Left colon (tissue), 2 donors: ENCODE measurements at regions of chr10 and their contacts with region 1.

Region 1: DNA sequence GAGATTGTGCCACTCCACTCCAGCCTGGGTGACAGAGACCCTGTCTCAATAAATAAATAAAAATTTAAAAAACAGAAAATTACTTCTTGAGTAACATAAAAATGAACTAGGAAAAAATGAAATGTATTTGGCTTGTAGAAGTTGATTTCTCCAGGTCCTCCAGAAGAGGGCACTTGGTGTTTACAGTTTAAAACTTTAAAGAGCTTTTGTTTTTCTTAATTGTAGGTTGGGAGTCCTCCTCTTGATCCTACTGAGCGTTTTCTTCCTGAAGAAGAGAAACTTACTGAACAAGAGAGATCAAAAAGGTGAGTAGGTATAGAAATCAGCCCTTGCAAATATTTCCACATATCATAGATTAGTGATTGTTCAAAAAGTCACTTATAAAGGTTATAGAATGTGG is 16.2 kb downstream of the KIFBP start:
- DNase-seq: no peak
- ATAC-seq: peak; percentile 48

Region 2: GRCh38 chr10:67110286-67110685 is 1894.5 kb before region 1 on chr10:
- intact Hi-C with region 1: no loop called
- DNase-seq: no peak
- ATAC-seq: no peak

Region 3: DNA sequence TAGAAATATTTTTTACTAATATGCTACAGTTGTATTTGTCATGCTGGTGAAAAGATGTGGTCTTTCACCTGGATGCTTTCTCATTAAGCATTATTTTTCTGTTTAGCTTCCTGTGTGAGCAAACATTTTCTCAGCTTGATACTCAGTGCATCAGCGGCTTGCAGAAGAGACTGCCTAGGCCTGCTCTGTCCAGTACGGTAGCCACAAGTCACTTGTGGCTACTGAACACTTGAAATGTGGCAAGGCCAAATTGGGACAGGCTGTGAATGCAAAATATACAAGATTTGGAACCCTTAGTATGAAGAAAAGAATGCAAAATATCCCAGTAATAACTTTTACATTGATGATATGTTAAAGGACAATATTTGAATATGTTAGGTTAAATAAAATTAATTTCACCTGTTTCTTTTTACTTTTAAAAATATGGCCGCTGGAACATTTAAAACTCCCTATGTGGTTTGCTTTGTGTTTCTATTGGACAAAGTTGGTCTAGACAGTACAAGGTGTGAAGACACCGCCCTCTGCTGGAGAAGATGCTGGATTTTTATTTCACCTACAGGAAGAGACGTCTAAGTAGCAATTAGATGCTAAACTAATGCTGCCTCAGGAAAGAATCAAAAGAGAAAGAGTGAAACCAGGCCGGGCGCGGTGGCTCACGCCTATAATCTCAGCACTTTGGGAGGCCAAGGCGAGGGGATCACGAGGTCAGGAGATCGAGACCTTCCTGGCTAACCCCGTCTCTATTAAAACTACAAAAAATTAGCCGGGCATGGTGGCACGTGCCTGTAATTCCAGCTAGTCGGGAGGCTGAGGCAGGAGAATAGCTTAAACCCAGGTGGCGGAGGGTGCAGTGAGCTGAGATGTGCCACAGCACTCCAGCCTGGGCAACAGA is 88.4 kb after region 1 on chr10:
- intact Hi-C with region 1: loop called (anchors 10 kb)
- DNase-seq: peak; percentile 68 to 87
- ATAC-seq: peak; percentile 93